Motor neuron (in vitro differentiated cells): ENCODE measurements at regions of chr2 and their contacts with region 1.

Region 1: DNA sequence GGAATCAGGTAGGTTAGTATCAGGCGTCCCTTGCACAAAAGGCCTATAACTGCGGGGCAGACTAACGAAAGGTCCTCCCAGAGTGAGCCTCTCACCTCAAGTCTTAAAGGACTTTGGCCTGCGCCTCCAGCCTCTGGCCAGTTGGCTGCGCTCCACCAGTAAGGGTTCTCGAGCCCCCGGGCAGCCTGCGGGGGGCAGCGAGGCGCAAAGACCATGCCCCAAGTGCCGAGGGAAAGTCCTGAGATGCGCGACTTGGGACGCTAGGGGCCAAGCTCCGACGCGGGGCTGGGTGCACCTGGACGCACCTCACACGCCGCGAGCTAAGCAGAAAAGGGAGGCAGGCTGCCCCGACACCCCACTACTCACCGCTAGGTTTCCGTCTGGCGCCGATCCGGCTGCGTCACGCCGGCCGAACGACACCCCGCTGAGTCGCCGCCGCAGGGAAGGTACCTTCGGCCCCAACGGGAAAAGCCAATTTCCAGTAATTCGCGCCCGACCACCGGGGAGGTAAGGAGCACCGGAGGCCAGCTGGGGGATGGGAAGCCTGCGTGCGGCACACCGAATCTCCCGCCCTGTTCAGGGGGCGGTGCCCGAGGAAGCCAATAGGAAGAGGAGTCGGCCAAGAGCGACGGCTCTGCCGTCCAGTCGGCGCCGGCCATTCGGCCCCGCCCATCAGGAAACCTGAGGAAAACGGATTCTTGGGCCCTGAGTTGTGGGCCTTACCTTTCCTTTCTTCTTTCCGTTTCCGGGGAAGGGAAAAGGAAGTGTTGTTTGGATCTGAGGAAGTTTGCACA is at the start of gene ORC2:
- ATAC-seq: peak; percentile 91 to 99 (median 98)
- H3K4me3 ChIP-seq: peak within 1 kb of the TSS; percentile 72 to 99 (median 89)
- H3K27ac ChIP-seq: peak within 1 kb of the TSS; percentile 58 to 86
- H3K4me1 ChIP-seq: peaks cover 14 to 19% of the 10 kb centered on the region in 2 donors
- total RNA-seq, gene ORC2: 7.7 to 36.9 (median 13.6) TPM

Region 2: DNA sequence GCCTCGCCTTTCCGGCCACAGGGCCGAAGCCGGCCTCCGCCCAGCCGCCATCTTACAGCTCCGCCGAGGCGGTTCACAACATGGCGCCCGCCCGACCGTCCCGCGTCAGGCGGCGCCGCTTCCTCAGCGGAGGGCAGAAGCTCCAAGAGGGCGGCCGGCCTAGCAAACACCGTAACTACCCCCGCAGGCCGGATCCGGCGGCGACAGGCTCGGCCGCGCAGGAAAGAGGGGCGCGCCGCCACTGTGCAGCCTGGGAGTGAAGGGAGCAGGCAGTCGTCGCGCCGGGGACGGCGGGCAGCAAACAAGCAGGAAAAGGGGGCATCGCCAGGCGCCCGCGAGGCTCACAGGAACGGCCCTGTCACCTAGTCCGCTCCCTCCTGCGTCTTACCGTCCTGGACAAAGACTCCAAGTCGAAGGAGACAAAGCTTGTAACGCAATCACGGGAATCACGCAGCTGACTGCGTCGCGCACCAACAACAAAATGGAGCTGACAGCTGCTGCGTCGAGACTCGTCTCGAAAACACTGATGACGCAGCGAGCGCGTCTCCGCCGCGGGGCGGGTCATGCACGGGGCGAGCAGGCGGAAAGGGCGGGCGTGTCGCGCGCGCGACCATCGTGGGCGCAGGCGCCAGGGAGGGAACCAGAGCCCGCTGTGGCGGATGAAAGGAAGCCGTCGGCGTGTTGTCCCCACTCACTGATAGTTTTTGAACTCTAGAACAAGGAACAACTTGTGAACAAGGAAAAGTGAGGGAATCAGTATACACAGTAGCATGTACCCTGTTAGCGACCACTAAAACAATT is 98.9 kb before region 1 on chr2 and contains the start of gene CLK1:
- in situ Hi-C with region 1: no loop called
- ATAC-seq: peak; percentile 78 to 91 (median 86)
- H3K4me3 ChIP-seq: peak within 1 kb of the TSS; percentile 79 to 99 (median 88)
- H3K27ac ChIP-seq: peak within 1 kb of the TSS; percentile 98 to 99
- H3K4me1 ChIP-seq: peaks cover 12 to 15% of the 10 kb centered on the region in 2 donors
- total RNA-seq, gene CLK1: 73.8 to 140 (median 109) TPM

Region 3: GRCh38 chr2:201071479-201072200 is 108.3 kb after region 1 on chr2 and contains the starts of genes HYCC2 and NDUFB3:
- in situ Hi-C with region 1: loop called in 1 of 9 experiments (anchors 25 kb)
- ATAC-seq: peak; percentile 94 to 99 (median 98)
- H3K4me3 ChIP-seq: peak within 1 kb of the TSS; percentile 57 to 95 (median 85)
- H3K27ac ChIP-seq: peak within 1 kb of the TSS; percentile 97
- H3K4me1 ChIP-seq: peaks cover 10 to 25% of the 10 kb centered on the region in 2 donors
- total RNA-seq, gene HYCC2: 7.2 to 20.7 (median 15.6) TPM
- total RNA-seq, gene NDUFB3: 77.6 to 135 (median 101) TPM